CD8-positive, alpha-beta T cell (primary cell): ENCODE measurements at regions of chr1 and their contacts with region 1.

Region 1: DNA sequence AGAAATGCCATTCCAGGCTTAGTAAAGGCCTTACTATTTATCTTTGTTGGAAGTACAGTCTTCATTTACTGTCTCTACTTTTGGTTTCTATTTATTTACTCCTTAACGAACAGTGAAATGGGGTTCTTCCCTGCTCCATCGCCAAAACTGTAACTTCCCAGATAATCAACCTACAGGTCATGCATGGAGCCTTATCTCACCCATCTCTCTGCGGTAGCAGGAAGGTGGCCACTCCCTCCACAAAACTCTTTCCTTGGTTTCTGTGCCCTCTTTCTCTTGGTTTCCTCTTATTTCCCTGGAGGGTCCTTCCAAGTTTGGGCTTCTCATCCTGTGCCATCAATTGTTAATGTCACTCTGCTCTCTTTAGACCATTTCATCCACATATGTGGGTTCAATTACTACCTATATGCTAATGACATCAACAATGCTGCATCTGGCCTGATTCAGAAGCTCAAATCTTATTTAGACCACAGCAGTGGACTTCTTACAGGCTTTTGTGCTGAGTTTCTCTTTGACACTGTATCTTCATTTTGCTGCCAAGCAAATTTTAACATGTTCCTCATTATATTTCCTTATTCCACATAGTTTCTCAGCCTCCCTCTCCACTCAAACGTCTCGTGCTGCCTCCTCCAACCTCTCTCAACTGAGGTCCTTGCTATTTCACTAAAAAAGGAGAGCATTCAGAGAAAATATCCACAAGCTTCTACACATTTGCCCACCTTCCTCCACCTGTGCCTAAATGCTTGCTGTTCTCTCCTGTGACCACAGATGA is 6.7 kb downstream of the TDRKH start:
- DNase-seq: no peak
- ATAC-seq: no peak
- H3K4me3 ChIP-seq: no peak overlapping the region
- H3K4me3 Mint-ChIP-seq: no peak overlapping the region
- H3K27ac ChIP-seq: no peak overlapping the region
- H3K27ac Mint-ChIP-seq: no peak overlapping the region
- H3K4me1 ChIP-seq: no peaks in the 10 kb centered on the region
- H3K4me1 Mint-ChIP-seq: no peaks in the 10 kb centered on the region
- H3K27me3 ChIP-seq: no peaks in the 10 kb centered on the region
- H3K27me3 Mint-ChIP-seq: no peaks in the 10 kb centered on the region
- CTCF ChIP-seq: no peak

Region 2: DNA sequence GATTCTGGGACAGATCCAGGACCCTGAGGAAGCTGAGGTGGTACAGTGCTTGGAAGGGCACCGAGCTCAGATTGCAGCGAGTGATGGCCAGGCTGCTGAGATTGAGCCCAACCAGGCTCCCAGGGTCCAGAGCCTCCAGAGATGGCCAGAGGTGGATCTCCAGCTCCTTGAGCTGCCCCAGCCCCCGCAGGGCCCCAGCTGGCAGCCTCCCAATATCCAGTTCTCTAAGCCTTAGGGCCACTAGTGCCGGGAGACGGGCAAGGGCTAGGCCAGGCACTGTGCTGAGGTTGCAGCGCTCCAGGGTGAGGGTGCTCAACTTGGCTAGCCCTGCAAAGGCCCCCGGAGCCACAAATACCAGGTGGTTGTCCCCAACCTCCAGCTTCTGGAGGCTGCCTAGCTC is 18.2 kb after region 1 on chr1:
- CTCF ChIA-PET with region 1: interaction called, 4 read pairs
- POLR2A ChIA-PET with region 1: interaction called, 3 read pairs
- intact Hi-C with region 1: loop called in 1 of 2 experiments (anchors 2 kb)
- DNase-seq: no peak
- ATAC-seq: no peak
- H3K4me3 ChIP-seq: no peak overlapping the region
- H3K4me3 Mint-ChIP-seq: no peak overlapping the region
- H3K27ac ChIP-seq: no peak overlapping the region
- H3K27ac Mint-ChIP-seq: no peak overlapping the region
- H3K4me1 ChIP-seq: no peaks in the 10 kb centered on the region
- H3K4me1 Mint-ChIP-seq: peaks cover 11% of the 10 kb centered on the region
- H3K27me3 ChIP-seq: no peaks in the 10 kb centered on the region
- H3K27me3 Mint-ChIP-seq: no peaks in the 10 kb centered on the region
- CTCF ChIP-seq: no peak